ENCODE measurements at regions of chr10 and their contacts with region 1.

Region 1: GRCh38 chr10:128069351-128070051 is 56.7 kb downstream of the MKI67 start:
- DNase-seq: peak; percentile 84
- ATAC-seq: peak; percentile 63
- H3K4me3 Mint-ChIP-seq: no peak overlapping the region
- H3K27ac Mint-ChIP-seq: no peak overlapping the region
- H3K4me1 Mint-ChIP-seq: peaks cover 39% of the 10 kb centered on the region
- H3K27me3 Mint-ChIP-seq: no peaks in the 10 kb centered on the region

Region 2: GRCh38 chr10:127906548-127907377 is 162.7 kb before region 1 on chr10 and contains the start of gene PTPRE:
- CTCF ChIA-PET with region 1: interaction called, 16 read pairs
- DNase-seq: peak; percentile 58
- ATAC-seq: peak; percentile 97
- H3K4me3 Mint-ChIP-seq: no peak within 1 kb of the TSS
- H3K27ac Mint-ChIP-seq: no peak within 1 kb of the TSS
- H3K4me1 Mint-ChIP-seq: no peaks in the 10 kb centered on the region
- H3K27me3 Mint-ChIP-seq: peaks cover 53% of the 10 kb centered on the region
- total RNA-seq, gene PTPRE: 16.5 to 27.1 TPM

Region 3: GRCh38 chr10:128035557-128035973 is 33.9 kb before region 1 on chr10:
- CTCF ChIA-PET with region 1: interaction called, 185 read pairs
- DNase-seq: peak; percentile 71
- ATAC-seq: peak; percentile 89
- H3K4me3 Mint-ChIP-seq: no peak overlapping the region
- H3K27ac Mint-ChIP-seq: no peak overlapping the region
- H3K4me1 Mint-ChIP-seq: peaks cover 2% of the 10 kb centered on the region
- H3K27me3 Mint-ChIP-seq: peaks cover 5% of the 10 kb centered on the region

Region 4: GRCh38 chr10:128040681-128041080 is 28.8 kb before region 1 on chr10:
- CTCF ChIA-PET with region 1: interaction called, 185 read pairs
- DNase-seq: no peak
- ATAC-seq: no peak
- H3K4me3 Mint-ChIP-seq: no peak overlapping the region
- H3K27ac Mint-ChIP-seq: no peak overlapping the region
- H3K4me1 Mint-ChIP-seq: peaks cover 10% of the 10 kb centered on the region
- H3K27me3 Mint-ChIP-seq: no peaks in the 10 kb centered on the region

Region 5: GRCh38 chr10:128047351-128047750 is 22.1 kb before region 1 on chr10:
- CTCF ChIA-PET with region 1: interaction called, 77 read pairs
- DNase-seq: peak; percentile 93
- ATAC-seq: peak; percentile 99
- H3K4me3 Mint-ChIP-seq: peak overlapping the region; percentile 79
- H3K27ac Mint-ChIP-seq: peak overlapping the region; percentile 91
- H3K4me1 Mint-ChIP-seq: peaks cover 51% of the 10 kb centered on the region
- H3K27me3 Mint-ChIP-seq: no peaks in the 10 kb centered on the region

Region 6: DNA sequence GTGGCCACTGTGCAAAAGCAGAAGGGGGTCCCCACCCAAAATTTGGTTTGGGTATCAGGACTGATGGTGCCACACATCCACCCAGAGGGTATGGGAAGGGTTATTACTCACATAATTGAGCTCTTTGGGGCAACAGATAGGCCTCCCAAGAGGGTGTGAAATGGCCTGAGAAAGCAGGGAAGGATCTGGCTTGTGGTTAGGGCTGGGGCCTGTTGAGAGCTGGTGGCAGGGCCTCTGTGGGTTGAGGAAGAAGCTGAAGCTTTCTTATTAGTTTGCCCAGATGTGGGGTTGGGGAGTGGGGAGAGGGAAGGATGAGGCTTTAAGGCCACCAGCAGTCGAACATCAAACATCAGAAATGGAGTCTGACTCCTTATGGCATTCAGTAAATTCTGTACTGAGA is 75.0 kb after region 1 on chr10:
- CTCF ChIA-PET with region 1: interaction called, 10 read pairs
- DNase-seq: no peak
- ATAC-seq: no peak
- H3K4me3 Mint-ChIP-seq: no peak overlapping the region
- H3K27ac Mint-ChIP-seq: no peak overlapping the region
- H3K4me1 Mint-ChIP-seq: peaks cover 31% of the 10 kb centered on the region
- H3K27me3 Mint-ChIP-seq: peaks cover 15% of the 10 kb centered on the region

Region 7: GRCh38 chr10:128150045-128150493 is 80.6 kb after region 1 on chr10:
- CTCF ChIA-PET with region 1: interaction called, 10 read pairs
- DNase-seq: peak; percentile 81
- ATAC-seq: peak; percentile 99
- H3K4me3 Mint-ChIP-seq: peak overlapping the region; percentile 69
- H3K27ac Mint-ChIP-seq: no peak overlapping the region
- H3K4me1 Mint-ChIP-seq: peaks cover 27% of the 10 kb centered on the region
- H3K27me3 Mint-ChIP-seq: peaks cover 33% of the 10 kb centered on the region

Measured in activated CD8-positive, alpha-beta memory T cell treated with anti-CD3 and anti-CD28 coated beads, Interleukin-2, amount 10 ng/mL, durations not matched to agents 7 days and 5 days (primary cell).